SK-N-SH (cell line): ENCODE measurements at regions of chr18 and their contacts with region 1.

Region 1: GRCh38 chr18:11310476-11311086 is 161.2 kb upstream of the PIEZO2 start:
- DNase-seq: peak; percentile 44
- H3K4me3 ChIP-seq: no peak overlapping the region; a peak in 1 of 4 replicates
- H3K27ac ChIP-seq: no peak overlapping the region
- H3K4me1 ChIP-seq: 0 out of 4 replicates have a peak, but pooled peaks cover 0 to 6% of the 10 kb centered on the region in 2 experiments
- H3K27me3 ChIP-seq: no peaks in the 10 kb centered on the region
- CTCF ChIP-seq: peak; percentile 84
- EP300 ChIP-seq: no peak
- RAD21 ChIP-seq: peak; percentile 52

Region 2: DNA sequence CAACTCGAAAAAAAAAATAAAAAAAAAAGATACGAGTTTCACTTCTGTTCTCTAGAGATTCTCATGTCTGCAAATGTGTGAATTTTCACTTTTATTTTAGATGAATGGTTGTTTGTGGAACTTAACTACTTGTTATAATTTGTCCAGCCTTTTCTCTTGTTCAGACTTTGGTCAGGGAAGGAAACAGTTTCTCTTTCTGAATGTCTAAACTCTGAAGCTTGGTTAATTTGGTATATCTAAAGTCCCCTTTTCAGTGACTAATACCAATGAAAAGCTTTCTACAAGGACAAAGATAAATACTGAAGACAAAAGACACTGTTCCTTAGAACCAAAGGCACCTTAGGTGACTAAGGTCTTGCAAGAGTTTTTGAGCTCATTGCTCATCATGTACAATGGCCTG is 16.8 kb before region 1 on chr18:
- CTCF ChIA-PET with region 1: interaction called, 19 read pairs
- POLR2A ChIA-PET with region 1: no interaction called
- DNase-seq: no peak
- H3K4me3 ChIP-seq: no peak overlapping the region
- H3K27ac ChIP-seq: no peak overlapping the region
- H3K4me1 ChIP-seq: no peaks in the 10 kb centered on the region
- H3K27me3 ChIP-seq: peaks cover 26% of the 10 kb centered on the region
- CTCF ChIP-seq: no peak
- EP300 ChIP-seq: no peak
- RAD21 ChIP-seq: no peak